ENCODE measurements at regions of chr19 and their contacts with region 1.

Region 1: DNA sequence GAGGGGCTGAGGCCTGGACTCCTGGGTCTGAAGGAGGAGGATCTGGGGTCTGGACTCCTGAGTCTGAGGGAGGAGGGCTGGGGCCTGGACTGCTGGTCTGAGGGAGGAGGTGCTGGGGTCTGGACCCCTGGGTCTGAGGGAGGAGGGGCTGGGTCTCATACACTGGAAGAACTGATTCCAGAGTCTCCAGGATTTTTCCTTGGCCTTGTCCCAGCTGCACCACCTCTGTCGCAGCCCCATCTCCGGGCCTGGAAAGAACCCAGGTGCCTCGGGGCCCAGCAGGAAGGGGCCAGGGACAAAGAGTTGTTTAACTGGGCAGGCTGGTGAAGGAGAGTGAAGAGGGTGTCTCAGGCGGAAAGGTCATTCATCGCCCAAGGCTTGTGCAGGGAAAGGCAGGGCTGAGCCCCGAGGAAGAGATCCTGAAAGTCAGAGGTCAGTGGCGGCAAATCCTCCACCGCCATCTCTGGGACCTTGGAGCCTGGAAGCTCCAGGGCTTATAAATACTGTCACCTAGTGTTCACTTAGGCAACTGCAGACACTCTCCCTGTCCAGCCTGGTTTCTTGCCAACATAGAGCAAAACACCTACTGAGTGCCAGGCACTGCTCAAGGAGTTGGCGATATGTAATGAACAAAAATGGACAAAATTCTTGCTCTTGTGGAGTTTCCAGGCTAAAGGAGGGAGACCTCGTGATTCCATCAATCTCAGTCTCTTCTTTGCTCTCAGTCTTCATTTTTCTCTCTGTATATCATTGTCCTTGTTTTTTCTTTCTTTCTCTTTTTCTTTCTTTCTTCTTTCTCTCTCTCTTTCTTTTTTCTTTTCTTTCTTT is 4.4 kb upstream of the KCNN4 start:
- DNase-seq: peak; percentile 86
- H3K4me3 ChIP-seq: no peak overlapping the region
- H3K27ac ChIP-seq: peak overlapping the region; percentile 21
- H3K4me1 ChIP-seq: peaks cover 26% of the 10 kb centered on the region
- H3K27me3 ChIP-seq: no peaks in the 10 kb centered on the region

Region 2: DNA sequence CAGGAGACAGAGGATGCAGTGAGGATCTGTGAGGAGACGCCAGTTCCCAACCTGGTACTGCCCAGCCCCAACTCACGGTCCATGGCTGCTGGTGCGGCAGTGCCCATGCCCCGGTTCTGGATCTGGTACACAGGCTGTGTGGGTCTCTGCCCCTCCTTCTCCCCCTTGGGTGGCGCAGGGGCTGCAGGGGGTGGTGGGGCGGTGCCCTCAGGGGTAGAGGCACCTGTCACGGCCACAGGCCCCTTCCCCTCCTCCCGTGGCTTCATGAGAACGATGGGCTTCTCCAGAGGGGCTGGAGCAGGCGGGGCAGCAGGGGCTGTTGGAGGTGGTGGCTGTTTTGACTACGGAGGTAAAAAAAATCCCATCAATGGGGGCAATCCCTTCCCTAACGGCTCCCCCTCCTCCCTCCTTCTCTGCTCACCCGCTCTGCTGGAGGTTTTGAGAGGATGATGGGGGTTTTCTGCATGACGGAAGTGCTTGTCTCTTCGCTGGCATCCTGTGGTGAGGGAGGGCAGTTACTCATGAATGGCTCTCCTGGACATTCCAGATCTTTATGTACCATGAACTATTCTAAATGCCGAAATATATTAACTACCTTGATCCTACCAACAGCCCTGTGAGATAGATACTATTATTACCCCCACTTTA is 37.5 kb before region 1 on chr19:
- in situ Hi-C with region 1: loop called (anchors 5 kb)
- DNase-seq: no peak
- H3K4me3 ChIP-seq: no peak overlapping the region
- H3K27ac ChIP-seq: no peak overlapping the region
- H3K4me1 ChIP-seq: peaks cover 24% of the 10 kb centered on the region
- H3K27me3 ChIP-seq: no peaks in the 10 kb centered on the region

Measured in GM23248 (cell line).